Adrenal gland (tissue), 19 donors: ENCODE measurements at regions of chr15 and their contacts with region 1.

Region 1: DNA sequence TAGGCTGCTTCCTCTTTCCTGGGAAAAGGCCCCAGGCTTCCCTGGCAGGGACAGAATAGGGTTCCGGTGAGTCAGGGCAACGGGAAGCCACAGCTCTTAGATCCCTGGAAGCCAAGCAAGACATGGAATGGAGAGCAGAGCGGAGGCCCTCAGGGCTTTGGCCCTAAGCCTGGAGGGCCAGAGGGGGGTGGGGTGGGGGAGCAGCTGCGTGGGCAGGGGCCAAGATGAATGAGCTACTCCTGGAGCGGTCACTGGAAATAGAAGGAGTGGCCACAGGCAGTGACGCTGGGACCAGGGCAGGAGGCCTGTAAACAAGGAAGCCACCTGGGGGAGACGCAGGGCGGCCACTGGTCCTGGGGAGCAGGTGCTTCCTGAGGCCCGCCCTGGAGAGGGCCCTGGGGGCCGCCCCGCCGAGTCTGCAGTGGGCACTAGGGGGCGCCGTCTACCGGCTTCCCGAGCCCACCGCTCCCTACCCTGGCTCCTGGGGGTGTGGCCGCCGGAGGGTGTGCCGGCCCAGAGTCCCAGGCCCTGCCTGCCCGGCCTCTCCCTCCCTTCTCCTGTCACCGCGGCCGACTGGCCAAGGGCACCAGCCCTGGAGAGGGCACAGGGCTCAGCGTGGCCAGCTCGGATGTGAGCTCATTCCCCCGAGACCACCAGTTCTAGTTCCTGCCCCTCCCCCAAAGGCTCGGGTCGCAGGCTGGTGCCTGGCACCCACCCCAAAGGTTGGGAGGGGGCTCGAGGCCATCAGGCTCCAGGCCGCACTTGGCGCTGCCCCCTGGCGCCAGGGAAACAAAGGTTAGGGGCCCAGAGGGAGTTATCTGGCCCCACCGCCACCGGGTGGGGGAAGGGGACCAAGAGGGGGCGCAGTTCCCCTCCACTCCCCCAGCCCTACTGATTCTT is 12.1 kb downstream of the VPS18 start:
- DNase-seq: peak; percentile 91 to 98 (median 96)
- H3K4me3 ChIP-seq: peak overlapping the region in 2 of 4 donors; percentile 31 to 52
- H3K27ac ChIP-seq: peak overlapping the region; percentile 78 to 98 (median 91)
- H3K4me1 ChIP-seq: peaks cover 24 to 52% of the 10 kb centered on the region in 2 donors
- H3K27me3 ChIP-seq: no peaks in the 10 kb centered on the region
- CTCF ChIP-seq: peak; percentile 61 to 92 (median 76)
- POLR2A ChIP-seq: peak in 1 of 2 donors; percentile 72

Region 2: DNA sequence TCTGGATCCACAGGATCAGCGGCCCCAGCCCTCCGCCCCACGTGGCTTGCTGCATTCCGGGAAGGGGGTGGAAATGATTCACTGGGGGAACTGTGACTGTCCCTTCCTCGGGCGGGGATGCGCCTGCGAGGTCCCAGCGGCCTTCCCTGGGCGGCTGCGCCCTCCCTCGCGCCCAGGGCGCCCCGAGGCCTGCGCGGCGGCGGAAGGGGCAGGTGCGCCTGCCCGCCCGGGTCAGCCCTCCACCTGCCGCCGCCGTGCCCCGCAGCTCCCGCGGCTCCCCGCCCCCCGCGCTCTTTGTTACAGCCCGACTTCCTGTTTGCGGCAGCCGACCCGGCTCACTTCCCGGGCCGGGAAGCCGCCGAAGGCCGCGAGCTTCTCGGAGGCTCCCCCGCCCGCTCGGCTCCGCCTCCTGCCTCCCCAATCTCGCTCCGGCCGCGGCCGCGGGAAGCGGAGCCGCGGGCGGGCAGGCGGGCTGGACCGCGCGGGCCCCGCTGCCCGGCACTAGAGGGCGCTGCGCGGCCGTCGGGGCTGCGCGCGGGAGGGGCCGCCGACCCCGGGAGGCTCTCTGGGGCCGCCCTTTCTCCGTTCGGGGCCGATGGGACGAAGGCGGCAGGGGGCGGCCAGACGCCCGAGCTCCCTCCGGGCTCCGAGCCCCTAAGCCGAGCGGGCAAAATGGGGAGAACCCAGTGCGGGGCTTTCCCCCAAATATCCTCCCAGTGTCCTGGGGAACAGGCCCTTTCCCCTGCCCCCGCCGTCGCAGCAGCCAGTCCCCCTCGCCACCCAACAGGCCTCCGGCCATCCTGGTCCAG is 35.4 kb after region 1 on chr15:
- intact Hi-C with region 1: loop called in 1 of 2 experiments (anchors 5 kb)
- DNase-seq: peak; percentile 78 to 92 (median 87)
- H3K4me3 ChIP-seq: peak overlapping the region in 2 of 4 donors; percentile 42 to 70
- H3K27ac ChIP-seq: peak overlapping the region; percentile 53 to 97 (median 89)
- H3K4me1 ChIP-seq: peaks cover 12 to 15% of the 10 kb centered on the region in 2 donors
- H3K27me3 ChIP-seq: no peaks in the 10 kb centered on the region
- CTCF ChIP-seq: peak in 4 of 6 experiments; percentile 48 to 90 (median 72)
- POLR2A ChIP-seq: peak; percentile 65 to 79

Region 3: DNA sequence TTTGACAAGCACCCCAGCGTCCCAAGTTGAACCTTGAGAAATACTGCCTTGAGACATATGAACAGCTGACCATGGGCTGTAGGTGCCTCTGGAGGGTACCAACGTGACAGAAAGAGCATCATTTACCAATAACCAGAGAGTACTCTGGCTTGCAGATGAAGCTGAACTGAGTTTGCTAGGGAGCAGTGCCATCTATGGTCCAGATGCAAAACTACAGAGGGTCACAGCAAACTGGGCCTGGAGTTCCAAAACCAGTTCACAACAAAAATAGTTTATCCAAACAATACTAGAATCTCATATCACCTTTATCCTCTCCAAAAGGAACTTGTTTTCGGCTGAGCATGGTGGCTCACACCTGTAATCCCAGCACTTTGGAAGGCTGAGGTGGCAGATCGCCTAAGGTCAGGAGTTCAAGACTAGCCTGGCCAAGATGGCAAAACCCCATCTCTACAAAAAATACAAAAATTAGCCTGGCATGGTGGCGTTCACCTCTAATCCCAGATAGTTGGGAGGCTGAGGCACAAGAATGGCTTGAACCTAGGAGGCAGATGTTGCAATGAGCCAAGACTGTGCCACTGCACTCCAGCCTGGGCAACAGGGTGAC is 116.2 kb after region 1 on chr15:
- intact Hi-C with region 1: loop called (anchors 5 kb)
- DNase-seq: peak; percentile 23 to 71 (median 44)
- H3K4me3 ChIP-seq: no peak overlapping the region
- H3K27ac ChIP-seq: no peak overlapping the region
- H3K4me1 ChIP-seq: peaks cover 0 to 14% of the 10 kb centered on the region in 2 donors
- H3K27me3 ChIP-seq: no peaks in the 10 kb centered on the region
- CTCF ChIP-seq: peak; percentile 27 to 77 (median 68)
- POLR2A ChIP-seq: no peak

Region 4: GRCh38 chr15:41180206-41180789 is 274.0 kb after region 1 on chr15:
- intact Hi-C with region 1: loop called (anchors 2 to 5 kb)
- DNase-seq: no peak
- H3K4me3 ChIP-seq: no peak overlapping the region
- H3K27ac ChIP-seq: no peak overlapping the region
- H3K4me1 ChIP-seq: no peaks in the 10 kb centered on the region
- H3K27me3 ChIP-seq: no peaks in the 10 kb centered on the region
- CTCF ChIP-seq: no peak
- POLR2A ChIP-seq: no peak